Activated CD8-positive, alpha-beta T cell treated with anti-CD3 and anti-CD28 coated beads for 36 hours (primary cell): ENCODE measurements at regions of chr20 and their contacts with region 1.

Region 1: GRCh38 chr20:5156675-5157448 is 30.1 kb downstream of the CDS2 start:
- DNase-seq: no peak
- ATAC-seq: no peak
- H3K4me3 Mint-ChIP-seq: no peak overlapping the region
- H3K27ac Mint-ChIP-seq: no peak overlapping the region
- H3K4me1 Mint-ChIP-seq: peaks cover 61% of the 10 kb centered on the region
- H3K27me3 Mint-ChIP-seq: no peaks in the 10 kb centered on the region
- CTCF ChIP-seq: no peak

Region 2: GRCh38 chr20:5024982-5025381 is 131.9 kb before region 1 on chr20:
- CTCF ChIA-PET with region 1: no interaction called
- POLR2A ChIA-PET with region 1: no interaction called
- intact Hi-C with region 1: no loop called
- DNase-seq: no peak
- ATAC-seq: no peak
- H3K4me3 Mint-ChIP-seq: no peak overlapping the region
- H3K27ac Mint-ChIP-seq: no peak overlapping the region
- H3K4me1 Mint-ChIP-seq: peaks cover 3% of the 10 kb centered on the region
- H3K27me3 Mint-ChIP-seq: no peaks in the 10 kb centered on the region
- CTCF ChIP-seq: no peak

Region 3: GRCh38 chr20:5100684-5101347 is 56.0 kb before region 1 on chr20:
- CTCF ChIA-PET with region 1: no interaction called
- POLR2A ChIA-PET with region 1: no interaction called
- intact Hi-C with region 1: no loop called
- DNase-seq: peak; percentile 85
- ATAC-seq: peak; percentile 91
- H3K4me3 Mint-ChIP-seq: no peak overlapping the region
- H3K27ac Mint-ChIP-seq: peak overlapping the region; percentile 10
- H3K4me1 Mint-ChIP-seq: peaks cover 10% of the 10 kb centered on the region
- H3K27me3 Mint-ChIP-seq: no peaks in the 10 kb centered on the region
- CTCF ChIP-seq: peak; percentile 94

Region 4: DNA sequence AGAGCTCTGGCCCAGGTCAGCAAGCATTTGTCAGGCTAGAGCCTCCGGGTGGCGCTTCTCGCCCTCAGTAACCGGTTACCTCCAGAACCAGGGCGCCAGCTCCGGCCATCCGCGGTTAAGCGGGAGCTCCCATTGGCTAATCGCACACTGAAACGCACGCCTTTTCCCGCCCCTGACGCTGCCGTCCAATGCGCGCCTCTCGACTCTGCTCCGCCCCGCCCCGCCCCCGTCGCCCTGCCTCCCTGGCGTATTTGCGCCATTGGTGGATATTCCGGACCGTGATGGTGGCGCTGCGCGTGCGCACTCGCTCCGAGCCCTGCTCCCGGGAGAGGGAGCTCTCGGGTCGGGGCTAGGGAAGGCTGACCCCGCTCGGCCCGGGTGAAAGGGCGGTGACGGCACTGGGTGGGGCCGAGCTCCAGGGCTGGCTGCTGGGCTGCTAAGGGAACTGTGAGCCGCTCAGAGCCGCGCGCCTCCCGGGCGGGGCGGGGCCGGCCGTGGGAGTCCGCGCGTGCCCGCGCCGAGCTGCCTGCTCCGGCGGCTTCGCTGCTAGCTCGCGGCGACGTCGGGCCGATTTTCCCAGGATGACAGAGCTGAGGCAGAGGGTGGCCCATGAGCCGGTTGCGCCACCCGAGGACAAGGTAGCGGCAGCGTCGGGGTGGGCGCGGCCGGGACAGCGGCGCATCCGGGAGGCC is 30.2 kb before region 1 on chr20 and contains the start of gene CDS2:
- CTCF ChIA-PET with region 1: interaction called, 14 read pairs
- POLR2A ChIA-PET with region 1: interaction called, 5 read pairs
- intact Hi-C with region 1: no loop called
- DNase-seq: peak; percentile 100
- ATAC-seq: peak; percentile 86
- H3K4me3 Mint-ChIP-seq: peak within 1 kb of the TSS; percentile 88
- H3K27ac Mint-ChIP-seq: peak within 1 kb of the TSS; percentile 97
- H3K4me1 Mint-ChIP-seq: peaks cover 36% of the 10 kb centered on the region
- H3K27me3 Mint-ChIP-seq: no peaks in the 10 kb centered on the region
- CTCF ChIP-seq: peak; percentile 51
- total RNA-seq, gene CDS2: 30.2 to 34.7 TPM

Region 5: GRCh38 chr20:5198651-5198924 is 41.7 kb after region 1 on chr20:
- CTCF ChIA-PET with region 1: no interaction called
- POLR2A ChIA-PET with region 1: no interaction called
- intact Hi-C with region 1: no loop called
- DNase-seq: no peak
- ATAC-seq: no peak
- H3K4me3 Mint-ChIP-seq: no peak overlapping the region
- H3K27ac Mint-ChIP-seq: no peak overlapping the region
- H3K4me1 Mint-ChIP-seq: no peaks in the 10 kb centered on the region
- H3K27me3 Mint-ChIP-seq: no peaks in the 10 kb centered on the region
- CTCF ChIP-seq: no peak